ENCODE measurements at regions of chr3 and their contacts with region 1.

Region 1: DNA sequence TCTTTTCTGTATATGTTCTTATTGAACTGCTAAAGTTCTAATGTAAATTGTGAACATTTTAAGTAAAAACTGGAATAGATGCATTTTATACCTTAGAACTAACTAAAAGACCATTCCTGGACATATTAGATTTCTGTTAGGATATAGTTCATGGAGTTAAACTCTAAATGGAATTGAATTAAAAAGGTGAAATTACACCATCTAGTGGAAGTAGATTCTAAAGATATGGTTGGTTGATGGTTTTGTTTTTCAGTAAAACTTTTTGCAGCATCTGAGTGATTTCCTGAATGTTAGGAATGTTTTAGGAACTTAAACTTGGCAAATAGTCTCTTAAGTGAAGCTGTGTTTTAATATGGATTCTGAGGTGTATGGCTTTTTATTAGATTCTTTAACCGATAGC is 96.8 kb downstream of the SLMAP start:
- DNase-seq: peak; percentile 12
- H3K4me3 ChIP-seq: no peak overlapping the region
- H3K27ac ChIP-seq: peak overlapping the region; percentile 62
- H3K4me1 ChIP-seq: peaks cover 6% of the 10 kb centered on the region
- H3K27me3 ChIP-seq: no peaks in the 10 kb centered on the region
- CTCF ChIP-seq: peak; percentile 13 to 39

Region 2: GRCh38 chr3:57646723-57647122 is 206.2 kb before region 1 on chr3:
- CTCF ChIA-PET with region 1: interaction called, 3 read pairs
- dilution Hi-C with region 1: no loop called
- in situ Hi-C with region 1: loop called in 1 of 2 experiments (anchors 25 kb)
- intact Hi-C with region 1: loop called (anchors 2 kb)
- DNase-seq: peak; percentile 78
- H3K4me3 ChIP-seq: no peak overlapping the region
- H3K27ac ChIP-seq: peak overlapping the region; percentile 29
- H3K4me1 ChIP-seq: peaks cover 3% of the 10 kb centered on the region
- H3K27me3 ChIP-seq: no peaks in the 10 kb centered on the region
- CTCF ChIP-seq: peak in 1 of 2 donors; percentile 44

Region 3: GRCh38 chr3:57659806-57660439 is 193.0 kb before region 1 on chr3:
- CTCF ChIA-PET with region 1: no interaction called
- dilution Hi-C with region 1: no loop called
- in situ Hi-C with region 1: loop called in 1 of 2 experiments (anchors 25 kb)
- intact Hi-C with region 1: no loop called
- DNase-seq: peak; percentile 26
- H3K4me3 ChIP-seq: no peak overlapping the region
- H3K27ac ChIP-seq: no peak overlapping the region
- H3K4me1 ChIP-seq: peaks cover 18% of the 10 kb centered on the region
- H3K27me3 ChIP-seq: no peaks in the 10 kb centered on the region
- CTCF ChIP-seq: no peak

Region 4: DNA sequence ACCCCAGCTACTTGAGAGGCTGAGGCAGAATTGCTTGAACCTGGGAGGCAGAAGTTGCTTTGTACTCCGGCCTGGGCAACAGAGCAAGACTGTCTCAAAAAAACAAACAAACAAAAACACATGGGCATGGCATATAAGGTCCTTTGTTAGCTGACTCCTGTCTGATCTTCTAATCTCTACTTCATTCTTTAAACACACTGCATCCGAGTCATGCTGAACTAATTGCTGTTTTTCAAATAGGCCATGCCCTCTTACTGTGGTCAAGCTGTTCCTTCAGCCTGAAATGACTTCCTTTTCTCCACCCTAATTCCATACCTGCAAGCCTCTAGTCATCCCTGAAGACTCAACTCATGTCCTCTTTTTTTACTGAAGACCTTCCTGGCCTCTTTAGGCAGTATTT is 119.1 kb before region 1 on chr3:
- CTCF ChIA-PET with region 1: no interaction called
- dilution Hi-C with region 1: no loop called
- in situ Hi-C with region 1: no loop called
- intact Hi-C with region 1: no loop called
- DNase-seq: peak; percentile 40
- H3K4me3 ChIP-seq: no peak overlapping the region
- H3K27ac ChIP-seq: no peak overlapping the region
- H3K4me1 ChIP-seq: no peaks in the 10 kb centered on the region
- H3K27me3 ChIP-seq: no peaks in the 10 kb centered on the region
- CTCF ChIP-seq: no peak

Region 5: GRCh38 chr3:57910988-57911387 is 58.1 kb after region 1 on chr3:
- CTCF ChIA-PET with region 1: interaction called, 13 read pairs
- dilution Hi-C with region 1: no loop called
- in situ Hi-C with region 1: no loop called
- intact Hi-C with region 1: no loop called
- DNase-seq: no peak
- H3K4me3 ChIP-seq: no peak overlapping the region
- H3K27ac ChIP-seq: no peak overlapping the region
- H3K4me1 ChIP-seq: no peaks in the 10 kb centered on the region
- H3K27me3 ChIP-seq: no peaks in the 10 kb centered on the region
- CTCF ChIP-seq: peak; percentile 39 to 48

Region 6: DNA sequence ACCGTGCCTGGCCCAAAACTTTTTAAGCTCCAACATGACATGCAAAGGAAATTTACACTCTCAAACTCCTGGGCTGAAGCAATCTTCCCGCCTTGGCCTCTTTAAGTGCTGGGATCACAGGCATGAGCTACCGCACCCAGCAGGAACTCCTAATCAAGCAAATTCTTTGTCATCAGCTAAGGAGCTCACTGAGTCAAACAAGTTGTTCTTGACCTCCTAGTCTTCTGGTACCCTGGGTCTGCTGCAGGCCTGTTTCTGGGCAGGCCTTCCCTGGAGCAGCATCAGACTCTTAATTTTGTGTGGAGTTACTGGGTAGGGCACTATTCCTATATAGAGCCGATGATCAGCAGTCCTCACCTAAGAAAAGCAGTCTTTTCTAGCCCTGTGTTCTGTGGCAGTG is 86.9 kb after region 1 on chr3:
- CTCF ChIA-PET with region 1: no interaction called
- dilution Hi-C with region 1: loop called (anchors 5 kb)
- in situ Hi-C with region 1: no loop called
- intact Hi-C with region 1: no loop called
- DNase-seq: no peak
- H3K4me3 ChIP-seq: no peak overlapping the region
- H3K27ac ChIP-seq: no peak overlapping the region
- H3K4me1 ChIP-seq: no peaks in the 10 kb centered on the region
- H3K27me3 ChIP-seq: no peaks in the 10 kb centered on the region
- CTCF ChIP-seq: no peak

Measured in mammary epithelial cell (primary cell).